Right cardiac atrium (tissue), 5 donors: ENCODE measurements at regions of chr13 and their contacts with region 1.

Region 1: GRCh38 chr13:21638319-21639282 is 32.3 kb upstream of the FGF9 start:
- DNase-seq: no peak
- ATAC-seq: no peak
- H3K4me3 ChIP-seq: no peak overlapping the region
- H3K27ac ChIP-seq: no peak overlapping the region
- H3K4me1 ChIP-seq: no peaks in the 10 kb centered on the region
- H3K27me3 ChIP-seq: no peaks in the 10 kb centered on the region

Region 2: DNA sequence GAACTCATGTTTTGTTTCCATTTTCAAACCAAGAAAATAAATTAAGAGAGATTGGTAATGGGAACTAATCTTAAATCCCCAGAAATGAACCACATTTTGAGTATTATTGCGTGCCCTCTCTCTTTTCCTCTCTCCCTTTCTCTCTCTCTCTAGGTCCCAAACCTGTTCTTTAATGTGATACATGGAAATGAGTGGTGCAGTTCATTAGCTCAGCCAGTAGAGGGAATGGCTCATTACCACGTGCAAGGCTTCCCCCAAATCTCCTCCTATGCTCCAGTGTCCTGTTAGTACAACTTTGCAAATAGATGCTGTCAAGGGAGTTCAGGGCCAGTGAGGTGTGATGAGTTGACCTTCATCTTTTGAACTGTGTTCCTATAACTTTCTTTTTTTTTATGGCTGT is 210.7 kb after region 1 on chr13:
- intact Hi-C with region 1: no loop called
- DNase-seq: no peak
- ATAC-seq: peak; percentile 72 to 80
- H3K4me3 ChIP-seq: no peak overlapping the region
- H3K27ac ChIP-seq: no peak overlapping the region
- H3K4me1 ChIP-seq: no peaks in the 10 kb centered on the region
- H3K27me3 ChIP-seq: no peaks in the 10 kb centered on the region

Region 3: GRCh38 chr13:22278336-22278929 is 639.8 kb after region 1 on chr13:
- intact Hi-C with region 1: loop called in 2 of 4 experiments (anchors 10 kb)
- DNase-seq: peak in 2 of 3 donors; percentile 39 to 83
- ATAC-seq: no peak
- H3K4me3 ChIP-seq: no peak overlapping the region
- H3K27ac ChIP-seq: no peak overlapping the region
- H3K4me1 ChIP-seq: no peaks in the 10 kb centered on the region
- H3K27me3 ChIP-seq: no peaks in the 10 kb centered on the region

Region 4: GRCh38 chr13:22757530-22758120 is 1119.0 kb after region 1 on chr13:
- intact Hi-C with region 1: loop called in 1 of 4 experiments (anchors 5 kb)
- DNase-seq: no peak
- ATAC-seq: no peak
- H3K4me3 ChIP-seq: no peak overlapping the region
- H3K27ac ChIP-seq: no peak overlapping the region
- H3K4me1 ChIP-seq: no peaks in the 10 kb centered on the region
- H3K27me3 ChIP-seq: no peaks in the 10 kb centered on the region